PC-9 (cell line): ENCODE measurements at regions of chr13 and their contacts with region 1.

Region 1: DNA sequence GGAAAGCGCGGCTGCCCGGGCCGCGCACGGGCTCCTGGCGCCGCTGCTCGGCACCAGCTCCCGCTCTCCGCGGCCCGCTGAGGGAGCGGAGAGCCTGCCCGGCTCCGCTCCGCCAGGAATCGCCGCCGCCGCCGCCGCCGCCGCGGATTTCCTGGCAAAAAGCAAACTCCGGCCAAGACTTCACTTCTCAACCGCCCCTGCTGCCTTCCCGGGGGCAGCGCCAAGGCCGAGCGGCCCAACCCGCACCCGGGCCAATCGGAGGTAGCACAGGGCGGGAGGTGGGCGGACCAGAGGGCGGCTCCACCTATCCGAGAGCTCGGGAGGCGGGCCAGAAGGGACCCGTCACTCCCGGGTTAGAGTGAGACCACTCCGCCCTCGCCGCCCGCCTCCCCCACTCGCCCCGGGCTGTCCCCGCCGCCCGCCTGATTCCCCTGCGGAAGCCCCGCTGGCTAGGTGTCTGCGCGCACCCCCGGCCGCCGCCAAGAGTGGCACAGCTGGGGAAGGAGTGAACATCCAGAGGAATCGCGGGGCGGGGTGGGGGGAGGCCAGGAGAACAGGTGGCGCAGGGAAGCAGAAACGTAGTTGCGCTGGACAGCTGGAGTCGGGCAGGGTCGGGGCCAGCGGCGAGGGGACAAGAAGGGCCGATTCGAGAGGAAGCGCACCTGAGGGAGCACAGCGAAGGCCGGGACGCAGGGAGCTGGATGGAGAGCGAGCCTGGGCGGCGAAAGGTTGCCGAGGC is at the start of gene LNX2:
- DNase-seq: peak; percentile 85 to 96
- H3K4me3 ChIP-seq: peak within 1 kb of the TSS; percentile 100
- H3K27ac ChIP-seq: peak within 1 kb of the TSS; percentile 98
- H3K4me1 ChIP-seq: peaks cover 42% of the 10 kb centered on the region
- H3K27me3 ChIP-seq: no peaks in the 10 kb centered on the region
- CTCF ChIP-seq: no peak
- total RNA-seq, gene LNX2: 7.0 and 7.1 TPM in 2 replicates

Region 2: GRCh38 chr13:27449936-27450828 is 170.4 kb before region 1 on chr13 and contains the start of gene MTIF3:
- CTCF ChIA-PET with region 1: no interaction called
- POLR2A ChIA-PET with region 1: no interaction called
- intact Hi-C with region 1: loop called (anchors 1 kb)
- DNase-seq: peak; percentile 90 to 92
- H3K4me3 ChIP-seq: peak within 1 kb of the TSS; percentile 83
- H3K27ac ChIP-seq: peak within 1 kb of the TSS; percentile 94
- H3K4me1 ChIP-seq: peaks cover 25% of the 10 kb centered on the region
- H3K27me3 ChIP-seq: no peaks in the 10 kb centered on the region
- CTCF ChIP-seq: no peak
- total RNA-seq, gene MTIF3: 22.9 and 28.3 TPM in 2 replicates

Region 3: GRCh38 chr13:27599845-27600553 is 20.5 kb before region 1 on chr13:
- CTCF ChIA-PET with region 1: no interaction called
- POLR2A ChIA-PET with region 1: interaction called, 9 read pairs
- intact Hi-C with region 1: loop called (anchors 2 kb)
- DNase-seq: peak; percentile 41 to 84
- H3K4me3 ChIP-seq: no peak overlapping the region
- H3K27ac ChIP-seq: no peak overlapping the region; the same call in 1 of the 2 replicates
- H3K4me1 ChIP-seq: peaks cover 22% of the 10 kb centered on the region
- H3K27me3 ChIP-seq: no peaks in the 10 kb centered on the region
- CTCF ChIP-seq: no peak